Activated CD4-positive, alpha-beta memory T cell treated with anti-CD3 and anti-CD28 coated beads for 36 hours (primary cell): ENCODE measurements at regions of chr6 and their contacts with region 1.

Region 1: GRCh38 chr6:150685860-150686259 is 86.2 kb downstream of the PLEKHG1 start:
- DNase-seq: peak; percentile 73
- H3K4me3 Mint-ChIP-seq: no peak overlapping the region
- H3K27ac Mint-ChIP-seq: no peak overlapping the region
- H3K4me1 Mint-ChIP-seq: no peaks in the 10 kb centered on the region
- H3K27me3 Mint-ChIP-seq: peaks cover 1% of the 10 kb centered on the region

Region 2: DNA sequence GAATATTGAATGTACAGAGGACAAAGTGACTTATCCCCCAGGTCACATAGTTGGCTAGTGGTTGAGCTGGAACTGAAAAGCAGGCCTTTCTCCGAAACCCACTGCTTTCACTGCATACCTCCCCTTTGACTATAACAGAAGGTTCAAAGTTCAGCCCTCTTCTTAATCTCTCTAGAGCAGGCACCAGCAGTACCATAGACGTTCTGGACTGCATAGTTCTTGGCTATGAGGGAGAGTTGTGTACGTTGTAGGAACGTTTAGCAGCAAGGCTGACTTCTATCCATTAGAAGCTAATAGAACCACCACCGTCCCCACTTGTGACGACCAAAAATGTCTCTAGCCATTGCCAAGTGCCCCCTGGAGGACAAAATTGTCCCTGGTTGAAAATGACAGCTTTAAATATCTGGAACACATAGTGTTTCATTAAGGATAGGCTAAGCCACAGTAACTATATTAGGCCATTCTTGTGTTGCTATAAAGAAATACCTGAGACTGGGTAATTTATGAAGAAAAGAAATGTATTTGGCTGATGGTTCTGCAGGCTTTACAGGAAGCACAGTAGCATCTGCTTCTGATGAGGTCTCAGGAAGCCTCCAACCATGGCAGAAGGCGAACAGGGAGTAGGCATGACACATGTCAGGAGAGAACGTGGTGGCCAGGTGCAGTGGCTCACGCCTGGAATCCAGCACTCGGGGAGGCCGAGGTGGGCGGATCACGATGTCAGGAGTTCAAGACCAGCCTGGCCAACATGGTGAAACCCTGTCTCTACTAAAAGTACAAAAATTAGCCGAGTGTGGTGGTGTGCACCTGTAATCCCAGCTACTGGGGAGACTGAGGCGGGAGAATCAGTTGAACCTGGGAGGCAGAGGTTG is 56.0 kb after region 1 on chr6:
- CTCF ChIA-PET with region 1: interaction called, 11 read pairs
- POLR2A ChIA-PET with region 1: no interaction called
- intact Hi-C with region 1: no loop called
- DNase-seq: peak; percentile 12
- H3K4me3 Mint-ChIP-seq: no peak overlapping the region
- H3K27ac Mint-ChIP-seq: no peak overlapping the region
- H3K4me1 Mint-ChIP-seq: no peaks in the 10 kb centered on the region
- H3K27me3 Mint-ChIP-seq: peaks cover 2% of the 10 kb centered on the region